ENCODE measurements at regions of chr11 and their contacts with region 1.

Region 1: DNA sequence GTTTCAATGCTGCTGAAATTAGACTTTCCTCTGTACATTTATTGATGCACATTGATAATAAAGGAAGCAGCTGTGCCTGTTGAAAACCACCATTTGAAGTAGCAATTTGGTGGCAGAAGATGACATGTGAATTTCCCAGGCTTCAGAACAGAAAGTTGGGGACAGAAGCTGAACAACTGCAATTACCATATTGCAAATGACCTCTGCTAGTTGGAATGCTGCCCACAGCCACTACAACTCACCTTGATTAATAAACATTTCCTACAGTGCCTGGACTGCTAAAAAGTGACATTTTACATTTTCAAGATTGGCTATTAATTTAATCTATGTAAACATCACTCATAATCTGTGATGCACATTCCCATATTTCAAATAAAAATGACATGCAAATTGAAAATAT is 208.6 kb downstream of the LUZP2 start:
- ATAC-seq: peak in 2 of 8 experiments; percentile 20 to 31
- H3K4me3 ChIP-seq: no peak overlapping the region
- H3K27ac ChIP-seq: no peak overlapping the region
- H3K4me1 ChIP-seq: peaks cover 4 to 10% of the 10 kb centered on the region in 2 donors

Region 2: DNA sequence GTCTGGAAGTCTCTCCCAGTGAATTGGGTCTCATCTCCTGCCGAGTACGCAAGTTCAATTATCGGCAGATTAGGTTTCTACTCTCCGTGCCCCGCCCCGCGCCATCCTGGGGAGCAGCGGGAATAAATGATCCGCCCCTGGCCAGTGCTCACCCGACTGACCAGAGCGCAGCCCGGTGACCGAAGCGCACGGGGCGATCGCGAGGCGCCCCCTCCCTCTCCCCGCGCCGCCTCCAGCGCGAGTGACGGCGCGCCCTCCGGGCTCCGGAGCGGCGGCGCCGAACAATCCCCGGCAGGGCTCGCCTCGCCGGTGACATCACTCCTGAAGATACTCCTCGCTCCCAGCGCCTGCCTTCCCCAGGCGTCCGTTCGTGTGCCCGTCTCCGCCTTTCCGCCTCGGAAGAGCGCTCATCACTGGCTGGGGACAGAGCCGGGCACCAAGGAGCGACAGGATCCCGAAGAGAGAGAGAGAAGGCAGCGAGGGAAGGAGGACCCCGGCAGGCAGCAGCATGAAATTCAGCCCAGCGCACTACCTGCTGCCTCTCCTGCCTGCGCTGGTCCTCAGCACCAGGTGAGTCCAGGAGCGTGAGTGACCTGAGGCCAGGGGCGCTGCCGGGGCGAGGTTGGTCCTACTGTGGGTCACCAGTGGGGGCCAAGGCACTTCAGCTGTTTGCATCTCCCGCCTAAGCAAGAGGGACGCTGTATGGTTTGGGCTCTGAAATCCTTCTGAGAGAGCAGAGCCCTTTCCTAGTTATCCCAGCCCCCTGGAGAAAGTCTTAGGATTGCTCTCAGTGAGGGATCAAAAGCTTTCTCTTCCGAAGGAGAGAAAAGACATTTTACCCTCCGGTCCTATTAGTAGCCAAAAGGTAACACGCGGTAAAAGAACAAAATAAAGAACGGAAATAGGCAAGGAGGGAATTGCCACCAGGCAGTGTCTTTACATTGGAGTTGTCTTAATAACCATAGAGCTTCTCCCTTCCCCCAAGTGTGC is 208.4 kb before region 1 on chr11 and contains the start of gene LUZP2:
- in situ Hi-C with region 1: no loop called
- ATAC-seq: peak; percentile 56 to 96 (median 94)
- H3K4me3 ChIP-seq: peak within 1 kb of the TSS; percentile 40 to 64 (median 53)
- H3K27ac ChIP-seq: peak within 1 kb of the TSS; percentile 45 to 59
- H3K4me1 ChIP-seq: peaks cover 0 to 6% of the 10 kb centered on the region in 2 donors
- total RNA-seq, gene LUZP2: 0.46 to 48.5 (median 9.8) TPM

Region 3: DNA sequence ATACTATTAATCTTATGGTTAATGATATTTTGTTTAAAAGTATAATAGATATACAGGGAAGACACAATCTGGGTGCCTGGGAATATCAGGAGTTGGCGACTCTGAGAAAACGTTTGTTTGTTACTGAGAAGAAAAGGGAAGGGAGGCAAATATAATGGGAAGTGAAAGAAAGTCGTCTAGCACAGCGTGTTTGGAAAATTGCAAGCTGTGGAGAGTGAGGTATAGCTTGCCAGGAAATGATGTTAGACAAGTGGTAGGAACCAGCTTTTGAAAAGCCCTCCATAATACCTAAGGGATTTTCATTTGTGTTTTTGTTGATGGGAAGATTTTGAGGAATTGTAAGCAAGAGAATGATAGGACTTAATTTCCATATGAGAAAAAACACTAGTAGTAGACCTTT is 113.5 kb after region 1 on chr11:
- in situ Hi-C with region 1: loop called in 1 of 9 experiments (anchors 25 kb)
- ATAC-seq: no peak
- H3K4me3 ChIP-seq: no peak overlapping the region
- H3K27ac ChIP-seq: no peak overlapping the region
- H3K4me1 ChIP-seq: no peaks in the 10 kb centered on the region